ENCODE measurements at regions of chr15 and their contacts with region 1.

Region 1: GRCh38 chr15:74826364-74826819 is at the start of gene CPLX3:
- DNase-seq: peak in 27 of 35 experiments; percentile 8 to 70 (median 42)
- ATAC-seq: peak; percentile 68 to 89 (median 76)
- H3K4me3 ChIP-seq: no peak within 1 kb of the TSS
- H3K4me3 Mint-ChIP-seq: no peak within 1 kb of the TSS
- H3K27ac ChIP-seq: no peak within 1 kb of the TSS
- H3K27ac Mint-ChIP-seq: no peak within 1 kb of the TSS
- H3K4me1 ChIP-seq: peaks cover 0 to 11% of the 10 kb centered on the region in 2 experiments
- H3K4me1 Mint-ChIP-seq: peaks cover 0 to 6% (median 0%) of the 10 kb centered on the region in 3 donors
- H3K27me3 ChIP-seq: peaks cover 2 to 39% of the 10 kb centered on the region in 2 experiments
- H3K27me3 Mint-ChIP-seq: peaks cover 14 to 28% of the 10 kb centered on the region in 2 donors
- total RNA-seq, gene CPLX3: 0.16 to 0.50 (median 0.26) TPM in 3 of 5 donors, not detected in the others

Region 2: DNA sequence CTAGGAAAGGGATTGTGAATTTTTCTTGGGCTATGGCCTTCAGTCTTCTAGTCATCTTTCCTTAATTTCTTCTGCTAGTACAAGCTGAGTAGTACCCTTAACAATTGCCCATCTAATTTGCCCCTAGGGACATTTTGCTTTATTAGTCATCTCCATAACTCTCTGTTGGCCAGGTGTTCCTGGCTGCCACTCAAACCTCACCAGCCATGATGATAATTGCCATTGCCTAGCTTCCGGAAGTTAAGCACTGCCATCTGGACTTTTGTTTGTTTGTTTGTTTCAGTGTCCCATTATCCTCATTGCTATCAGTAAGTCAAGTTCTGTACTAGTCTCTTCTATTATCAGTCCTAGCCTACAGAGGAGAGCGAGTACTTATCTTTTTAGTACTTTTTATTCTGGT is 328.8 kb before region 1 on chr15:
- CTCF ChIA-PET with region 1: no interaction called
- POLR2A ChIA-PET with region 1: no interaction called
- DNase-seq: no peak
- ATAC-seq: no peak
- H3K4me3 ChIP-seq: no peak overlapping the region
- H3K4me3 Mint-ChIP-seq: no peak overlapping the region
- H3K27ac ChIP-seq: no peak overlapping the region
- H3K27ac Mint-ChIP-seq: no peak overlapping the region
- H3K4me1 ChIP-seq: no peaks in the 10 kb centered on the region
- H3K4me1 Mint-ChIP-seq: no peaks in the 10 kb centered on the region
- H3K27me3 ChIP-seq: no peaks in the 10 kb centered on the region
- H3K27me3 Mint-ChIP-seq: no peaks in the 10 kb centered on the region

Region 3: DNA sequence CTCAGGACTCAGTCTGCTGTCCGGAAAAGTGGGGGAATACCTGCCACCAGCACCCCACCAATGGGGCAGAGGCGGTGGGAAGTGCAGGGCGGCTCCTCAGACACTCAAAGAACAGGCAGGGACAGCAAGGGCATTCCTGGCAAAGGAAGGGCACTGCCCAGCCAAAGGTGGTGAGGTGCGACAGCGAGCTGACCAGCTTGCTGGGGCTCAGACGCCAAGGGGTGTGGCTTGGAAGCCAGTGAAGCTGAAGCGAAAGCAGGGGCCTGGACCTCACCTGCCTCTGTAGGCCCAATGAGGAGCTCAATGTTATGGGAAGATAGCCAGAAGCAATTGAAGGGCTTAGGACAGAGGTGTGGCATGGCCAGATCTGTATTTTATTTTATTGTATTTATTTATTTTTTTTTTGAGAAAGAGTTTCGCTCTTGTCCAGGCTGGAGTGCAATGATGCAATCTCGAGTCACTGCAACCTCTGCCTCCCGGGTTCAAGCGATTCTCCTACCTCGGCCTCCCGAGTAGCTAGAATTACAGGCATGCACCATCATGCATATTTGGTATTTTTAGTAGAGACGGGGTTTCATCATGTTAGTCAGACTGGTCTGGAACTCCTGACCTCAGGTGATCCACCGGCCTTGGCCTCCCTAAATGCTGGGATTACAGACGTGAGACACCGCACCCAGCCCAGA is 18.2 kb before region 1 on chr15:
- CTCF ChIA-PET with region 1: no interaction called
- POLR2A ChIA-PET with region 1: no interaction called
- DNase-seq: no peak
- ATAC-seq: no peak
- H3K4me3 ChIP-seq: no peak overlapping the region
- H3K4me3 Mint-ChIP-seq: no peak overlapping the region
- H3K27ac ChIP-seq: peak overlapping the region; percentile 52
- H3K27ac Mint-ChIP-seq: peak overlapping the region; percentile 77 to 90
- H3K4me1 ChIP-seq: peaks cover 6 to 29% of the 10 kb centered on the region in 2 experiments
- H3K4me1 Mint-ChIP-seq: peaks cover 27 to 34% (median 32%) of the 10 kb centered on the region in 3 donors
- H3K27me3 ChIP-seq: no peaks in the 10 kb centered on the region
- H3K27me3 Mint-ChIP-seq: no peaks in the 10 kb centered on the region

Region 4: DNA sequence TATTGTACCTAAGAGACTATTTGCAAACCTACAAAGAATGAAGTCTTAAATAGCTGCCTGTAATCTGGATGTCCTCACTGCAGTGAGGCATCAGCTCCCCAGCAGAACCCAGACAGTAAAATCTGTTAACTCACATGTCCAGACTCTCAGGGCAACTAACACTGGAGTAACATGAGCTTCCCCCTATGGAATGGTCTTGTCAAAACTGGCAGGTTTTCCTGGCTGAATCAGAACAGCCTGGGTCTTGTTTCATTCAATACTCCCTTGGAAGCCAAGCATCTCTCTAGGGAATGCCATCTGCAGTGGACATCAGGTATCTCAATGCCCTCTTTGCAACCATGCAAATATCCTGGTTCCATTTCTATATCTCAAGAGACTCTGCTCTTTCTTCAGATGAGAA is 728.3 kb after region 1 on chr15:
- CTCF ChIA-PET with region 1: no interaction called
- POLR2A ChIA-PET with region 1: interaction called in 1 of 2 experiments, 14 read pairs
- DNase-seq: no peak
- ATAC-seq: no peak
- H3K4me3 ChIP-seq: no peak overlapping the region
- H3K4me3 Mint-ChIP-seq: no peak overlapping the region
- H3K27ac ChIP-seq: no peak overlapping the region
- H3K27ac Mint-ChIP-seq: no peak overlapping the region
- H3K4me1 ChIP-seq: no peaks in the 10 kb centered on the region
- H3K4me1 Mint-ChIP-seq: peaks cover 5 to 13% (median 9%) of the 10 kb centered on the region in 3 donors
- H3K27me3 ChIP-seq: no peaks in the 10 kb centered on the region
- H3K27me3 Mint-ChIP-seq: no peaks in the 10 kb centered on the region

Measured in T-cell (primary cell).